Aorta (tissue), 5 donors: ENCODE measurements at regions of chr22 and their contacts with region 1.

Region 1: DNA sequence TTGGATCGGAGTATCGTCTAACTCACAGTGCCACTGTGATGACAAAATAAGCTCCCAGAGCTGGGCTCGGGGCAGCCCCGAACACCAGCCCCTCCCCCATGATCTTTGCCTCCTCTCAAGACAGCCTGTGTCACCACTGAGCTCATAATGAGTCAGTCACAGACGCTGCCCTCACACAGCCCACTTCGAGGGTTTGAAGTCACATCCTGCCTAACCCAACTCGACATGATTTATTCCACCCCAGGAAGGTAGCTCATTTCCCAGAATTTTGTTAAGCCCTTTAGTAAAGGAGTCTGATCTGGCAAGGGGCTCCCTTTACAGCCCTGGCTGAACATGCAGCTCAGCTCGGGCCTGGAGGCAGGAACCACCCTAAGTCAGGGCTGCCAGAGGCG is 22.8 kb downstream of the MYH9 start:
- DNase-seq: peak; percentile 89 to 91
- ATAC-seq: peak; percentile 79
- H3K4me3 ChIP-seq: no peak overlapping the region
- H3K27ac ChIP-seq: peak overlapping the region; percentile 48 to 88
- H3K4me1 ChIP-seq: peaks cover 7 to 18% of the 10 kb centered on the region in 2 donors
- H3K27me3 ChIP-seq: no peaks in the 10 kb centered on the region

Region 2: GRCh38 chr22:36331306-36331911 is 33.6 kb before region 1 on chr22:
- intact Hi-C with region 1: loop called (anchors 5 kb)
- DNase-seq: peak; percentile 93 to 95
- ATAC-seq: peak; percentile 69
- H3K4me3 ChIP-seq: no peak overlapping the region
- H3K27ac ChIP-seq: peak overlapping the region; percentile 99 to 100
- H3K4me1 ChIP-seq: peaks cover 3 to 14% of the 10 kb centered on the region in 2 donors
- H3K27me3 ChIP-seq: no peaks in the 10 kb centered on the region